ENCODE measurements at regions of chr1 and their contacts with region 1.

Region 1: DNA sequence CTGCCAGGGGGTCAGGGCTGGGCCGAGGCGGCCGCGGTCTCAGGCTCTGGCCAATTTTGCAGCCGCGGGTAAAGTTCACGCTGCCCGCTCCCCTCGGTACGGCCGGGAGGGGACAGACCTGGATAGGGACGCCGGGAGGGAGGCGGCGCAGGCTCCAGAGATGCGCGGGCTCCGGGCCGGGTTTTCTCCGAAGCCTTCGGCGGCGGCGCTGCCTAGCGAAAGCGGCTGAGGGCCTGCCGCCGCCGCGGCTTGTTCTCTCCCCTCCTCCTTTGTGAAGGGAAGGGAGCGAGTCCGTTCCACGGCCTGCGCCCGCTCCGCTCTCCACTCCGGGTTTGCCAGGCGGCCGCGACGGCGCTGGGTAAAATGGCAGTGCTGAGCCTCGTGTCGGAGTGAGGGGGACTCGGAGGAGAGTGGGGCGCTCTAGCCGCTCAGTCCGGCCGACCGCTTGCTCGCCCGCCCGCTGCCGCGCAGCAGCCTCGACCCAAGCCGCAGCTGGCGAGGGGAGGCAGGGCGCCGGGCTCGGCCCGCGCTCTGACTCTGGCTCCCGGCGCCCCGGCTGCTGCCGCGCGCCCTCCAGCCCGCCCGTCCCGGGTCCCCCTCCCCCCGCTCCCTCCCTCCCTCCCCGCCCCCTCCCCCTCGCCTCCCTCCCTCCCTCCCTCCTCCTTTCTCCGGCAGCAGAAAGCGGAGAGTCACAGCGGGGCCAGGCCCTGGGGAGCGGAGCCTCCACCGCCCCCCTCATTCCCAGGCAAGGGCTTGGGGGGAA is at the start of gene ARID1A:
- DNase-seq: peak; percentile 69 to 95
- H3K4me3 ChIP-seq: peak within 1 kb of the TSS; percentile 73
- H3K27ac ChIP-seq: peak within 1 kb of the TSS; percentile 90
- H3K4me1 ChIP-seq: peaks cover 50% of the 10 kb centered on the region
- H3K27me3 ChIP-seq: no peaks in the 10 kb centered on the region
- CTCF ChIP-seq: no peak
- total RNA-seq, gene ARID1A: 44.8 and 60.5 TPM in 2 replicates

Region 2: GRCh38 chr1:26560403-26560780 is 135.1 kb before region 1 on chr1:
- CTCF ChIA-PET with region 1: no interaction called
- POLR2A ChIA-PET with region 1: no interaction called
- intact Hi-C with region 1: no loop called
- DNase-seq: no peak
- H3K4me3 ChIP-seq: no peak overlapping the region
- H3K27ac ChIP-seq: no peak overlapping the region
- H3K4me1 ChIP-seq: no peaks in the 10 kb centered on the region
- H3K27me3 ChIP-seq: no peaks in the 10 kb centered on the region
- CTCF ChIP-seq: no peak

Region 3: DNA sequence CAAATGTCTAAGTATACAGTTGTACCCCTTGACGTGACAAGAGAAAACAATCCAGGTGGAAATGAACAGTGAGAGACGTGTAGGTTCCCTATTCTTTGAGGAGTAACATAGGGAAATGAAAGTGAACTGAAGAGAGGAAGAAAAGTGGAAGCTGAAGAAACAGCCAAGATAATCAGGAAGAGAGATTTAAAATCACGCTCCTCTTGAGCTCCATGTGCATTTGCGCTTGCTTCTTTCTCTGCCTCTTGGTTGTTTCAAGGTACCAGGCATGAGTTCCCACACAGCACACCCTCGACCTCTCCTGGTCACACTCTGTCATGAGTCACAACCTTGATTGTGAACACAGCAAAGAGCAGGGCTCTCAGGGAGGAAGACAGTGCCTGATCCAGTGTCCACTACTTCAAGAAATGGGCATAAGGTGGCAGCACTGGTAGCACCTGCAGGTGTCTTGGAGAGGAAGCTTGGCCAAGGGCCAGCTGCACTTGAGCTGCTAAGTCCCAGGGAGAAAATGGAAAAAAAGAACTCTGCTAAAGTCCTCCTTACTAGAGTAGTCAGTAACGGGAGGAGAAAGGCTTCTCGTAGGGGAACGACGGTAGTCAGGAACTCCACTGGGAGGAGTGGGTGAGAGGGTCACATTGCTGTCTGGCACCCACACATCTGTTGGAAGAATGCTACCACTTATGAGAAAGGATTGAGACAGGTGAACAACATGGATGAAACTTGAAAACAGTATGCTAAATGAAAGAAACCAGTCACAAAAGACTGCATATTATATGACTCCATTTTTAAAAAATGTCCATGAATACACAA is 18.0 kb before region 1 on chr1:
- CTCF ChIA-PET with region 1: interaction called, 15 read pairs
- POLR2A ChIA-PET with region 1: interaction called, 16 read pairs
- intact Hi-C with region 1: no loop called
- DNase-seq: peak; percentile 86 to 91
- H3K4me3 ChIP-seq: no peak overlapping the region
- H3K27ac ChIP-seq: no peak overlapping the region
- H3K4me1 ChIP-seq: peaks cover 11% of the 10 kb centered on the region; the same call in 1 of the 2 replicates
- H3K27me3 ChIP-seq: no peaks in the 10 kb centered on the region
- CTCF ChIP-seq: peak; percentile 71

Region 4: GRCh38 chr1:26733982-26734381 is 38.4 kb after region 1 on chr1:
- CTCF ChIA-PET with region 1: interaction called, 4 read pairs
- POLR2A ChIA-PET with region 1: no interaction called
- intact Hi-C with region 1: loop called (anchors 5 kb)
- DNase-seq: peak; percentile 27 to 92
- H3K4me3 ChIP-seq: no peak overlapping the region; the same call in 1 of the 2 replicates
- H3K27ac ChIP-seq: peak overlapping the region; percentile 88
- H3K4me1 ChIP-seq: peaks cover 56% of the 10 kb centered on the region
- H3K27me3 ChIP-seq: no peaks in the 10 kb centered on the region
- CTCF ChIP-seq: no peak

Region 5: DNA sequence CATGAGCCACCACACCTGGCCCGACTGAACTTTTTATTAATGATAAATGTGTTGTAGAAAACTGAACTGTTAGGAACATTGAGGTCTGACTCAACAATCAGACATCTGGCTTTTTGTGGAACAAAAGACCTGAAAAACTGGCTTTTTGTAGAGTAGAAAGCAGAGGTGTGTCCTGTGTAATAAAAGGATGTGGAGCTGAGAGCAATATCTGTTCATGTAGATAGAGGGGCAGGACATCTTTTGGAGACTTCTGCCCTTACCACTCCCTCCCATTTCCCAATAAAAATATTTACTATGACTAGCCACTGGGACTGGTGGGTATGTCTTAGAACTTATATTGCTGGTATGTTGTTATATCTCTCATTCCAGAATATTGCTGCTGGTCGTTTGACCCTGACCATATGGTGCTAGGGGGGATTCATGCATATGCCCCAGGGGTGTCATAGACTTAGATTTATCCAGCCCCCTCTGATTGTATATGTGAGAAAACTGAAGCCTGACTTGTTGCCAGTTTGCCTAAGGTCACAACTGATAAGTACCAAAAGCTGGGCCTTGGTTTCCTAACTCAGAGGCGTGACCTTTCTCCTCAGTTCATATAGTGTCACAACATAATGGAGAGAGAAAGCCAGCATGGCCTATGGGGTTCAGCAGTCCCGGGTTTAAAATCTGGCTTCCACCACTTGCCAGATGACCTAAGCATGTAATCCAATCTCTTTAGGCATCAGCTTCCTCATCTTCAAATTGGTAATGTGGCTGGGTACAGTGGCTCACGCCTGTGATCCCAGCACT is 58.7 kb after region 1 on chr1:
- CTCF ChIA-PET with region 1: no interaction called
- POLR2A ChIA-PET with region 1: no interaction called
- intact Hi-C with region 1: loop called (anchors 5 kb)
- DNase-seq: peak; percentile 41 to 93
- H3K4me3 ChIP-seq: peak overlapping the region; percentile 31; the same call in 1 of the 2 replicates
- H3K27ac ChIP-seq: peak overlapping the region; percentile 84
- H3K4me1 ChIP-seq: peaks cover 45% of the 10 kb centered on the region
- H3K27me3 ChIP-seq: no peaks in the 10 kb centered on the region
- CTCF ChIP-seq: no peak

Region 6: GRCh38 chr1:26771643-26772321 is 76.2 kb after region 1 on chr1:
- CTCF ChIA-PET with region 1: no interaction called
- POLR2A ChIA-PET with region 1: interaction called, 4 read pairs
- intact Hi-C with region 1: loop called (anchors 1 kb)
- DNase-seq: peak; percentile 89 to 90
- H3K4me3 ChIP-seq: no peak overlapping the region
- H3K27ac ChIP-seq: peak overlapping the region; percentile 79
- H3K4me1 ChIP-seq: peaks cover 41% of the 10 kb centered on the region
- H3K27me3 ChIP-seq: no peaks in the 10 kb centered on the region
- CTCF ChIP-seq: no peak

Region 7: DNA sequence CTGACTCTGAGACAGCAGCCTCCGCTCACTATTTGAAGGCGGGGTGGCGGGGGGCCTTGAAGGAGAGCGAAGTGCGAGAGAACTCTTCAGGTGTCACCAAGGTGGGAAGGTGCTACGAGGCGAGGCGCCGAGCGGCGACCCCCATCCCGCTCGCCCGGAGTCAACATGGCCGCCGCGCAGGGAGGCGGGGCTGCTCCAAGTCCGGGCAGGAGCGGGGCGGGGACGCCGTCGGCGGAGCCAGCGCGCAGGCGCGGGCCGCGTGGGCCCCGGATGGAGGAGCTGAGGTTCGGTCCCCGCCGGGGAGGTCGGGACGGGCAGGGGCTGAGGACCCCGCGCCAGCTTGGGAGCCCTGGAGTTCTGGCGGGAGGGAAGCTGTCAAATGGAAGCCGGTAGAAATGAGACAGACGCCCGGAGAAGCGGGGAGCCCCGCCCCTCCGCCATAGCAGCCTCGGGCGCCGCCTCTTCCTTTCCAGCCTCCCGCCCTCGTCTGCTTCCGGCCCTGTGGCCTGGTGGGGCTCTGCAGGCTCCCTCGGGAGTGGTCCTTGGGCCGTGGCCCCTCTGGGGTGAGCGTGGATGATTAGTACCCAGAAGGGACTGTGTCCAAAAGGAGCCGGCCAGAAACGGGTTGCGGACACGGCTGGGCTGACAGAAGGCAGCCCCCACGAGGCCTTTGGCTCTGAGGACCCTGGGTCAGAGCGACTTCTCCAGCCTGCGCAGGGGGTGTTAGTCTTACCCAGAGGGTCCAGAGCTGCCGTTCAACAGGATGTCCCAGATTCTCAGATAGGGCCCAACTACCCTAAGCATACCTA is 92.4 kb after region 1 on chr1 and contains the start of gene PIGV:
- CTCF ChIA-PET with region 1: interaction called, 5 read pairs
- POLR2A ChIA-PET with region 1: interaction called, 30 read pairs
- intact Hi-C with region 1: loop called (anchors 1 kb)
- DNase-seq: peak in 1 of 2 experiments; percentile 84
- H3K4me3 ChIP-seq: peak within 1 kb of the TSS; percentile 93
- H3K27ac ChIP-seq: peak within 1 kb of the TSS; percentile 92
- H3K4me1 ChIP-seq: peaks cover 52% of the 10 kb centered on the region
- H3K27me3 ChIP-seq: no peaks in the 10 kb centered on the region
- CTCF ChIP-seq: no peak
- total RNA-seq, gene PIGV: 30.8 and 31.9 TPM in 2 replicates

Region 8: DNA sequence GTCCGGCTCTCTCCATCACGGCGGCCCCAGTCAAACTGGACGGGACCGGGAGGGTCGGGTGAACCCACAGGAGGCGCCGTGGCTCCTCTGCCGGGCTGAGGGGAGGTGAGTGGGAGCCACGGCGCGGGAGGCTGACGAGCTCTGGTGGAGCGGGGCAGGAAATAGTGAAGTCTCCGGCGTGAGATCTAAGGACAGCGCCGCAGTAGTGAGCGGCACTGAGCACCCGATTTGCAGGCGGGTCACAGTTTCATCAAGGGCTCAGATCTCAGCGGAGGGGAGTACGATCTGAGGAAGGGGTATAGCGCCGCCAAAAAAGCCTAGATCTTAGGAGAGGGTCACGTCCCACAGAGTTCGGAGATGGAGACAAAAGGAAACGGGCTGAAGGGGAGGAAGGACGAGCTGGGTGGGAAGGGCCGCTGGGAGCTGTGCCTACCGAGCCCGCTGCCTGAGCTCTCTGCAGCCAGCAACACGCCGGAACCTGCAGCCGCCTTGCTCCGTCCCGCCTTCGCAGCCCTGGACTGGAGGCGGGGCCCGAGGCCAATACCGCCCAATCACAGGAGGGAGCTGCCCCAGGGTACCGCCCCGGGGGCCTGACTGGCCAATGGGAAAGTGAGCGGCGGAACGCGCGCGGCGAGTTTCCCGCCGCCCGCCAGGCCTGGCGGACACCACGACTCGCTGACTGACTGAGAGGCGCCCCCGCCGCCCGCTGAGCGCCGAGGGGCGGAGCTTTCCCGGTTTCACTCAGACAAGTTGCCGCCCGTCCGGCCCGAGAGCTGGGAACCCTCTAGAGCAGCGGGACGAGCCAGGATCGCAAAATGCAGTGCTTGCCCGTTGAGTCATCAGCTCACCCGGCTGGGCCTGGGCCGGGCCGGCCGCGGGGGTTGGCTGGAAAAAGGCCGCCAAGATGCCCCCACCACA is 169.3 kb after region 1 on chr1:
- CTCF ChIA-PET with region 1: no interaction called
- POLR2A ChIA-PET with region 1: interaction called, 5 read pairs
- intact Hi-C with region 1: loop called (anchors 10 kb)
- DNase-seq: peak; percentile 86 to 98
- H3K4me3 ChIP-seq: peak overlapping the region; percentile 85
- H3K27ac ChIP-seq: peak overlapping the region; percentile 100
- H3K4me1 ChIP-seq: peaks cover 57% of the 10 kb centered on the region
- H3K27me3 ChIP-seq: no peaks in the 10 kb centered on the region
- CTCF ChIP-seq: no peak